Activated B cell treated with CpG ODN at 0.5 μM for 24 hours (primary cell): ENCODE measurements at regions of chr14 and their contacts with region 1.

Region 1: GRCh38 chr14:77457522-77458290 is at the starts of genes AHSA1 and VIPAS39:
- DNase-seq: peak; percentile 79
- ATAC-seq: peak; percentile 93
- H3K4me3 Mint-ChIP-seq: peak within 1 kb of the TSS; percentile 100
- H3K27ac Mint-ChIP-seq: peak within 1 kb of the TSS; percentile 100
- H3K4me1 Mint-ChIP-seq: peaks cover 30% of the 10 kb centered on the region
- H3K27me3 Mint-ChIP-seq: no peaks in the 10 kb centered on the region
- CTCF ChIP-seq: no peak
- total RNA-seq, gene AHSA1: 169 and 175 TPM in 2 replicates
- total RNA-seq, gene VIPAS39: 15.1 and 15.3 TPM in 2 replicates

Region 2: DNA sequence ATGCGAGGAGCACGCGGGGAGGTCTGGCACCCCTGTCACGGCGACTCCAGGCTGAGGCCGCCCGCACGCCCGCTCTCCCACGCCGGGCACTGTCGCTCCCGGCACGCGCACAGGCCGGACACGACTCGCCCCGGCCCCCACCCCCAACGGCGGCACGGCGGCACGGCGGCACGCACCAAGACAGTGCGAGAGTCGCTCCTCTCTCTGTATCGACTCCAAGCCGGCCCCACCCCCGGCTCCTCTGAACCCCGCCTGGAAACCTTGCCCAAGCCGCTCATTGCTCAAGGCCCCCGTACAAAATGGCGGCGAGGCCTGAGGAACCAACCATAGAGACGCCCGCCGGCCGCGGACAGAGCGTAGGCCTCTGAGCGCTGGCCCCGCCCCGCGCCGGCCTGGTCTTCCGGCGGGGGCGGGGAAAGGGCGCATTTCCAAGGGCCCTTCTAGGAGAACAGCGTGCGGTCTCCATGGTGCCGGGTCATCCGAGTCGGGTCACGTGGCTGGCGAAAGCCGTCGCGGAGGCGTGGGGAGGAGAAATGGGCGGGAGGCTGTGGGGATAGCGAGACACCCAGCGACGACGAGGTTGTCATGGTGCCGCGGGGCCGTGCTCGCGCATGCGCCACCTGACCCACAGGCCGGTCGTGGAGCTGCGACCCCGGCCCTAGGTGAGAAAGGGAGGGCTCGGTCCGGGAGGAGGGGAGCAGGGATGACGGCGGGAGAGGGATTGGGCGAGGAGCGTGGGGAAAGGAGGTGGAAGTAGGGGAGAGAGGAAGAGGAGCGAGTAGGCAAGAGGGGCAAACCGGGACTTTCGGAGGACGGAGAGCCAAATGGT is 359.8 kb before region 1 on chr14 and contains the start of gene CIPC:
- CTCF ChIA-PET with region 1: no interaction called
- POLR2A ChIA-PET with region 1: no interaction called
- intact Hi-C with region 1: loop called (anchors 1 kb)
- DNase-seq: peak; percentile 96
- ATAC-seq: peak; percentile 86
- H3K4me3 Mint-ChIP-seq: peak within 1 kb of the TSS; percentile 99
- H3K27ac Mint-ChIP-seq: peak within 1 kb of the TSS; percentile 98
- H3K4me1 Mint-ChIP-seq: peaks cover 72% of the 10 kb centered on the region
- H3K27me3 Mint-ChIP-seq: no peaks in the 10 kb centered on the region
- CTCF ChIP-seq: no peak
- total RNA-seq, gene CIPC: 26.6 and 28.5 TPM in 2 replicates

Region 3: DNA sequence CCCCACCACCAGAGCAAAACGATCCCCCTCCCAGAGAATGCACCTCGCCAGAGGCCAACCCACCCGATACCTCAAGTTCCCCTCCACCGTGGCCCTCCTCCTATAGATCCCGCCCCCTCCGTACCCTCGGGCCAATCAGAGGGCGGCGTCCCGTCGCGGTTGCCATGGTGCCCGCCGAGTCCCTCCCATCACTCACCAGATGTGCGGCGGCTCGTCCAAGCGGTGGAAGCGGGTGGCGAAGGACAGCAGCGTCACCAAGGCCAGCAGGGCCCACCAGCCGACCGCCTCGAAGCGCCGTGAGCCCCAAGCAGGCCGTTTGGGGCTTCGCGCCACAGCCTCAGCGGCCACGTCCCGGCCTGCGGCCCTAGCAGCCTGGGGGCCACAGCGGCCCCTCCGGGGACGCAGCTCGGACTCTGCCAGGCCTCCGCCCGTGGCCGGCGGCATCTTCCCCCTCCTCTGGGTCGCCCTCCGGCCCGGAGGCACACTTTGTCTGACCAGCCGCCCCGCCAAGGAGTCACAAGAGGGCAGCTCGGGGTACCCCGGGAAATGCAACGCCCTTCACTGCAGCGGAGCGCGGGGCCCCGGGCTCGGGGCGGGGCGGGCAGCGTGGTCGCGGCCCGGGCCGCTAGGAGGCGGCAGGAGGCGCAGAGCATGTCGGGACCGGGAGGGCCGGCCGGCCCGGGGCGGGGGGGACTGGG is 137.3 kb before region 1 on chr14 and contains the start of gene POMT2:
- CTCF ChIA-PET with region 1: interaction called, 4 read pairs
- POLR2A ChIA-PET with region 1: interaction called, 32 read pairs
- intact Hi-C with region 1: loop called (anchors 1 kb)
- DNase-seq: peak; percentile 93
- ATAC-seq: peak; percentile 54
- H3K4me3 Mint-ChIP-seq: peak within 1 kb of the TSS; percentile 99
- H3K27ac Mint-ChIP-seq: peak within 1 kb of the TSS; percentile 100
- H3K4me1 Mint-ChIP-seq: peaks cover 19% of the 10 kb centered on the region
- H3K27me3 Mint-ChIP-seq: no peaks in the 10 kb centered on the region
- CTCF ChIP-seq: no peak
- total RNA-seq, gene POMT2: 28.7 and 30.8 TPM in 2 replicates

Region 4: DNA sequence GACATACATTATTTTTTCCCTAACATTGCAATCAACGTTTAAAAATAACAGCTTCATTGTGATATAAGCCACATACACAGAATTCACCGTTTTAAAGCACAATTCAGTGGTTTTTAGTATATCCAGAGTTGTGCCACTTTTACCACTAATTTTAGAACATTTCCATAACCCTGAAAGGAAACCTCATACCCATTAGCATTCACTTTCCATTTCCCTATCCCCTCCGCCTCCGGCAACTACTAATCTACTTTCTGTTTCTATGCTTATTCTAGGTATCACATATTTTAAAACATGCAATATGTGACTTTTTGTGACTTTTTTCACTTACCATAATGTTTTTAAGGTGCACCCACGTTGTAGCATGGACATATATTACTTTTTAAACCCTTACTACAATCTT is 96.5 kb after region 1 on chr14:
- CTCF ChIA-PET with region 1: interaction called, 7 read pairs
- POLR2A ChIA-PET with region 1: no interaction called
- intact Hi-C with region 1: loop called (anchors 1 kb)
- DNase-seq: no peak
- ATAC-seq: no peak
- H3K4me3 Mint-ChIP-seq: no peak overlapping the region
- H3K27ac Mint-ChIP-seq: peak overlapping the region; percentile 43
- H3K4me1 Mint-ChIP-seq: no peaks in the 10 kb centered on the region
- H3K27me3 Mint-ChIP-seq: no peaks in the 10 kb centered on the region
- CTCF ChIP-seq: no peak

Region 5: GRCh38 chr14:77641534-77642341 is 184.0 kb after region 1 on chr14:
- CTCF ChIA-PET with region 1: no interaction called
- POLR2A ChIA-PET with region 1: no interaction called
- intact Hi-C with region 1: loop called (anchors 1 kb)
- DNase-seq: peak; percentile 61
- ATAC-seq: peak; percentile 78
- H3K4me3 Mint-ChIP-seq: peak overlapping the region; percentile 95
- H3K27ac Mint-ChIP-seq: peak overlapping the region; percentile 93
- H3K4me1 Mint-ChIP-seq: peaks cover 16% of the 10 kb centered on the region
- H3K27me3 Mint-ChIP-seq: no peaks in the 10 kb centered on the region
- CTCF ChIP-seq: no peak

Region 6: DNA sequence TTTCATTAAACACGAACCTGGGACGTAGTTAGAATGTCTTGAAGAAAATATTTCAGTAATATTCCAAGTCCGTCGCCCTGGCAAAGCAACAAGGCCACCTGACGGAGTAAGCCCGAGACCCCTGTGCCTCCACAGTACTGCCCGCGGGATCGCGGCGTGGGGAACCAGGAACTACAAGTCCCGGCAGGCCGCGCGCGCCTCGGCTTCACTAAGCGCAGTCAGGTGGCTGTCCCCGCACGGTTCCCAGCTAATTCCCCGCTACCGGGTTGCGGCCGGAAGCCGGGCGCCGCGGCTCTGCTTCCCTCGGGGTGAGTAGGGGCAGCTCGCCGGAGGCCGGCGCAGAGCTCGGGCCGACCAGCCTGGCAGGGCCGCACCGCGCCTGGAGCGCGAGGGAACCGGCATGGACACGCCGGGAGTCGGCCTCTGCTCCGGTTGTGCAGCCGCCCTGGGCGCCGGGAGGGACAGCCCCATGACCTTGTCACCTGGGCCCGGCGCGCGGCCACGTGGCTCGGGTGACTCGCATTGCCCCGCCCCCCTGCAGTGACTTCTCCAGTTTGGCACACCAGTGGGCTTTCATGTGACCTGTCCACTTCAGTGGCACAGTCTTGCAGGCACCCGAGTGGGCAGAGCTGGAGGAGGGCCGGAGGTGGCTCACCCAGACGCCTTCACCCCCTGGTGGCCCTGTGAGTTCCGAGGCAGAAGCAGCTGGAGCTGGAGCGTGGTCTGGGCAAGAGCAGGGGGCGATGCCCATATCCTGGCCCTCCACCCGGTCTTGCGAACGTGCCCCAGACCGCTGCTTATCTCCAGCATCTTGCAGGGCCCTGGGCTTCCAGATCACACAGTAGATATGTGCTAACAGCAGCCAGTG is 342.4 kb after region 1 on chr14 and contains the start of gene ADCK1:
- CTCF ChIA-PET with region 1: no interaction called
- POLR2A ChIA-PET with region 1: no interaction called
- intact Hi-C with region 1: loop called (anchors 1 kb)
- DNase-seq: peak; percentile 86
- ATAC-seq: peak; percentile 91
- H3K4me3 Mint-ChIP-seq: peak within 1 kb of the TSS; percentile 88
- H3K27ac Mint-ChIP-seq: peak within 1 kb of the TSS; percentile 88
- H3K4me1 Mint-ChIP-seq: peaks cover 7% of the 10 kb centered on the region
- H3K27me3 Mint-ChIP-seq: no peaks in the 10 kb centered on the region
- CTCF ChIP-seq: no peak
- total RNA-seq, gene ADCK1: 8.6 and 10.4 TPM in 2 replicates